PC-9 (cell line): ENCODE measurements at regions of chr17 and their contacts with region 1.

Region 1: GRCh38 chr17:5438716-5439445 is at the start of gene C1QBP:
- DNase-seq: peak; percentile 82 to 96
- H3K4me3 ChIP-seq: peak within 1 kb of the TSS; percentile 72
- H3K27ac ChIP-seq: peak within 1 kb of the TSS; percentile 28
- H3K4me1 ChIP-seq: peaks cover 18% of the 10 kb centered on the region
- H3K27me3 ChIP-seq: no peaks in the 10 kb centered on the region
- CTCF ChIP-seq: peak; percentile 96
- total RNA-seq, gene C1QBP: 206 and 230 TPM in 2 replicates

Region 2: GRCh38 chr17:5344914-5345313 is 94.0 kb before region 1 on chr17:
- CTCF ChIA-PET with region 1: interaction called, 17 read pairs
- POLR2A ChIA-PET with region 1: no interaction called
- intact Hi-C with region 1: no loop called
- DNase-seq: no peak
- H3K4me3 ChIP-seq: no peak overlapping the region
- H3K27ac ChIP-seq: no peak overlapping the region
- H3K4me1 ChIP-seq: no peaks in the 10 kb centered on the region
- H3K27me3 ChIP-seq: no peaks in the 10 kb centered on the region
- CTCF ChIP-seq: no peak

Region 3: GRCh38 chr17:5419356-5419958 is 19.4 kb before region 1 on chr17 and contains the start of gene NUP88:
- CTCF ChIA-PET with region 1: interaction called, 9 read pairs
- POLR2A ChIA-PET with region 1: interaction called, 4 read pairs
- intact Hi-C with region 1: loop called (anchors 2 kb)
- DNase-seq: peak; percentile 91 to 96
- H3K4me3 ChIP-seq: peak within 1 kb of the TSS; percentile 98
- H3K27ac ChIP-seq: peak within 1 kb of the TSS; percentile 99
- H3K4me1 ChIP-seq: peaks cover 52% of the 10 kb centered on the region
- H3K27me3 ChIP-seq: no peaks in the 10 kb centered on the region
- CTCF ChIP-seq: no peak
- total RNA-seq, gene NUP88: 88.6 and 93.1 TPM in 2 replicates